CD8-positive, alpha-beta T cell (primary cell): ENCODE measurements at regions of chr3 and their contacts with region 1.

Region 1: DNA sequence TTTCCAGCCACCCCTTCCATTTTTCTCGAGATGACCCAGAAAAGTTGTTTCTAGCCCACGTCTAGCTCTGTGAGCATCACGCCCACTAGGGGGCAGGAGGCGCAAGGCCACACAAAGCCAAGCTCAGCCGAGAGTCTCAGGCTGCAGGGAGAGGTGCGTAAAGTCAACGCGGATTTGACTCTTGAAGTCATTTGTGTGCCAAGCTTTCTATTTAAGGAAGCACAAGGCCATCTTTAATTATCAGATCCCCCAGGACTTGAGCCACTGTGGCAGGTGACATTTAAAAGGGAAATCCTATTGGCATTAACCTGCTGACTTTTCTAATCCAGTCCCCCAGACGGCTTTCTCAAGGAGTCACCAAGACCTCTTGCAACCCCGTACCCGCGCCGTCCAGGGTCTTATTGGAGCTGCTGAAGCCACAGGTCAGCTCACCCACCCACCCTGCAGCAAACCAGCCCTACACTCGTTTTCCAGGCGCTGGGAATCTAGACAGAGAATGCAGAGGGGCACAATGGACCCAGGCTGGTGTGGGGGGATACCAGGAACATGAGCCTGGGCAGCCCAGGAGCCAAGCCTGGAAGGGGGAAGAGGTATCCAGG is 62.1 kb downstream of the CAPN7 start:
- DNase-seq: peak; percentile 69 to 92 (median 87)
- ATAC-seq: peak; percentile 50
- H3K4me3 ChIP-seq: no peak overlapping the region
- H3K4me3 Mint-ChIP-seq: no peak overlapping the region
- H3K27ac ChIP-seq: peak overlapping the region in 1 of 2 experiments; percentile 77
- H3K27ac Mint-ChIP-seq: no peak overlapping the region
- H3K4me1 ChIP-seq: peaks cover 64% of the 10 kb centered on the region
- H3K4me1 Mint-ChIP-seq: peaks cover 57% of the 10 kb centered on the region
- H3K27me3 ChIP-seq: no peaks in the 10 kb centered on the region
- H3K27me3 Mint-ChIP-seq: no peaks in the 10 kb centered on the region
- CTCF ChIP-seq: peak; percentile 83

Region 2: DNA sequence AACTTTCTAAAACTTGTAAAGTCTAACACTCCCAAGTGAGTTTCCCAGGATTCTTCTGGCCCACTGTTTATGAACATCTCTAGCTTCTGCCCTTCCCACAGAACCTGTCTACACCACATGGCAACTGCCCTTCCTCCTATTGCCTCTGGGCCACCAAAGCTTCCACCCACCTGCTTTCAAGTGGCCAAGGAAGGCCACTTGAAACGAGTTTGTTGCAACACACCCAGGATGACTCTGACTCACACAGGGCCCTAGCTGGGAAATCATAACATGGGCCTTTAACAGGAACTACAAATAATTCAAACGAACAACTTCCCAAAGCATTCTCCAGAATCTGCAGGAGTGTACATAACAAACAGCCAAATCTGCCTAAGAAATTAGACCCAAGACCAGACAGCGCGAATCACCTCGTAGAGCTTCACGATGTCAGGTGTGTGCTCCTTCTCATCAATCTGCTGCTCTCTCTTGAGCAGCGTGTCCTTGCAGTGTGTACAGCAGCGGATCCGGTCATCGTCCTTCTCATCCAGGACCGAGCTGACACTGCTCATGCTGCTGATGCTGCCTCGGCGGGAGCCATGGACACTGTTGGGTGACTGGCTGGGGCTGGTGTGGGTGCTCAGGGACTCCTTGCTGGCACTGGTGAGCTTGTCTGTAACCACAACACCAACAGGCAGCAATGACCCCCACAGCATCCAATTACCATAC is 186.0 kb before region 1 on chr3:
- CTCF ChIA-PET with region 1: no interaction called
- POLR2A ChIA-PET with region 1: no interaction called
- intact Hi-C with region 1: no loop called
- DNase-seq: no peak
- ATAC-seq: no peak
- H3K4me3 ChIP-seq: no peak overlapping the region
- H3K4me3 Mint-ChIP-seq: no peak overlapping the region
- H3K27ac ChIP-seq: no peak overlapping the region
- H3K27ac Mint-ChIP-seq: no peak overlapping the region
- H3K4me1 ChIP-seq: no peaks in the 10 kb centered on the region
- H3K4me1 Mint-ChIP-seq: no peaks in the 10 kb centered on the region
- H3K27me3 ChIP-seq: no peaks in the 10 kb centered on the region
- H3K27me3 Mint-ChIP-seq: no peaks in the 10 kb centered on the region
- CTCF ChIP-seq: no peak

Region 3: GRCh38 chr3:15098503-15099363 is 169.4 kb before region 1 on chr3 and contains the start of gene RBSN:
- CTCF ChIA-PET with region 1: no interaction called
- POLR2A ChIA-PET with region 1: interaction called, 3 read pairs
- intact Hi-C with region 1: loop called in 1 of 2 experiments (anchors 2 kb)
- DNase-seq: peak; percentile 87 to 98 (median 94)
- ATAC-seq: peak; percentile 76
- H3K4me3 ChIP-seq: peak within 1 kb of the TSS; percentile 71 to 76
- H3K4me3 Mint-ChIP-seq: peak within 1 kb of the TSS; percentile 88
- H3K27ac ChIP-seq: peak within 1 kb of the TSS; percentile 96 to 98
- H3K27ac Mint-ChIP-seq: peak within 1 kb of the TSS; percentile 95
- H3K4me1 ChIP-seq: peaks cover 16% of the 10 kb centered on the region
- H3K4me1 Mint-ChIP-seq: peaks cover 31% of the 10 kb centered on the region
- H3K27me3 ChIP-seq: no peaks in the 10 kb centered on the region
- H3K27me3 Mint-ChIP-seq: no peaks in the 10 kb centered on the region
- CTCF ChIP-seq: no peak
- total RNA-seq, gene RBSN: 41.9 to 48.1 TPM

Region 4: GRCh38 chr3:15291589-15292541 is 23.7 kb after region 1 on chr3:
- CTCF ChIA-PET with region 1: interaction called, 10 read pairs
- POLR2A ChIA-PET with region 1: interaction called, 8 read pairs
- intact Hi-C with region 1: loop called (anchors 1 kb)
- DNase-seq: peak; percentile 39 to 93 (median 73)
- ATAC-seq: peak; percentile 93
- H3K4me3 ChIP-seq: peak overlapping the region; percentile 19 to 23
- H3K4me3 Mint-ChIP-seq: peak overlapping the region; percentile 70
- H3K27ac ChIP-seq: peak overlapping the region; percentile 14 to 71
- H3K27ac Mint-ChIP-seq: peak overlapping the region; percentile 92
- H3K4me1 ChIP-seq: peaks cover 54% of the 10 kb centered on the region
- H3K4me1 Mint-ChIP-seq: peaks cover 73% of the 10 kb centered on the region
- H3K27me3 ChIP-seq: no peaks in the 10 kb centered on the region
- H3K27me3 Mint-ChIP-seq: no peaks in the 10 kb centered on the region
- CTCF ChIP-seq: no peak

Region 5: GRCh38 chr3:15325242-15325641 is 57.1 kb after region 1 on chr3:
- CTCF ChIA-PET with region 1: interaction called, 63 read pairs
- POLR2A ChIA-PET with region 1: interaction called, 3 read pairs
- intact Hi-C with region 1: no loop called
- DNase-seq: no peak
- ATAC-seq: no peak
- H3K4me3 ChIP-seq: no peak overlapping the region
- H3K4me3 Mint-ChIP-seq: no peak overlapping the region
- H3K27ac ChIP-seq: no peak overlapping the region
- H3K27ac Mint-ChIP-seq: no peak overlapping the region
- H3K4me1 ChIP-seq: peaks cover 22% of the 10 kb centered on the region
- H3K4me1 Mint-ChIP-seq: peaks cover 52% of the 10 kb centered on the region
- H3K27me3 ChIP-seq: no peaks in the 10 kb centered on the region
- H3K27me3 Mint-ChIP-seq: no peaks in the 10 kb centered on the region
- CTCF ChIP-seq: no peak

Region 6: GRCh38 chr3:15354485-15354884 is 86.4 kb after region 1 on chr3:
- CTCF ChIA-PET with region 1: interaction called, 11 read pairs
- POLR2A ChIA-PET with region 1: interaction called, 4 read pairs
- intact Hi-C with region 1: no loop called
- DNase-seq: no peak
- ATAC-seq: no peak
- H3K4me3 ChIP-seq: no peak overlapping the region
- H3K4me3 Mint-ChIP-seq: no peak overlapping the region
- H3K27ac ChIP-seq: no peak overlapping the region
- H3K27ac Mint-ChIP-seq: no peak overlapping the region
- H3K4me1 ChIP-seq: peaks cover 14% of the 10 kb centered on the region
- H3K4me1 Mint-ChIP-seq: peaks cover 22% of the 10 kb centered on the region
- H3K27me3 ChIP-seq: no peaks in the 10 kb centered on the region
- H3K27me3 Mint-ChIP-seq: no peaks in the 10 kb centered on the region
- CTCF ChIP-seq: no peak

Region 7: GRCh38 chr3:15377961-15378791 is 110.0 kb after region 1 on chr3:
- CTCF ChIA-PET with region 1: interaction called, 104 read pairs
- POLR2A ChIA-PET with region 1: interaction called, 11 read pairs
- intact Hi-C with region 1: loop called (anchors 1 kb)
- DNase-seq: peak; percentile 88 to 97 (median 93)
- ATAC-seq: peak; percentile 97
- H3K4me3 ChIP-seq: no peak overlapping the region
- H3K4me3 Mint-ChIP-seq: no peak overlapping the region
- H3K27ac ChIP-seq: peak overlapping the region; percentile 55 to 90
- H3K27ac Mint-ChIP-seq: peak overlapping the region; percentile 89
- H3K4me1 ChIP-seq: peaks cover 5% of the 10 kb centered on the region
- H3K4me1 Mint-ChIP-seq: peaks cover 8% of the 10 kb centered on the region
- H3K27me3 ChIP-seq: no peaks in the 10 kb centered on the region
- H3K27me3 Mint-ChIP-seq: no peaks in the 10 kb centered on the region
- CTCF ChIP-seq: peak; percentile 85

Region 8: DNA sequence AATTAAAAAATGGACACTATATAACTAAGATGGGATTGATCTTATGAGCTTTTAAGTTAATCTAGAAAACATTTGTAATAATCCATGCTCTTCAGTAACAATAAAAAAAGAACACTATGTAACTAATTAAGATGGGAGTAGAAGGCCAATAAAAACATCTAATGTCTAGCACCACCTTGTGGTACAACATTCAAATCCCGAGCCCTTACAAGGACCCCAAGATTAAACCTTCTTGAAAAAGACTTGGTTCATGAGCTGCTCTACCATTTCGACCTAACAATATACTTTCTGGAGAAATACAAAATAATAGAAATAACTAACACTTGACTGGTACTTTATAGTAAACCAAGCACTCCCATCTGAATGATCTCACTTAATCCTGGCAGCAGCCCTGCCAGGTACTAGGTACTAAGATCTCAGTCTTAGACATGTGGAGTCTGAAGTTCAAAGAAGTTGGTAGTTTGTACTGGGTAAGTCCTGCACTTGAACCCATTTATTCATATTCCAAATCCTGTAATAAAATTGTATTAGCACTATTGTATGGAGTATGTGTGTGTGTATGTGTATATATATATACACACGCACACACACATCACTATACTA is 137.4 kb after region 1 on chr3:
- CTCF ChIA-PET with region 1: interaction called, 107 read pairs
- POLR2A ChIA-PET with region 1: no interaction called
- intact Hi-C with region 1: loop called (anchors 1 kb)
- DNase-seq: peak in 3 of 9 experiments; percentile 22 to 77 (median 69)
- ATAC-seq: peak; percentile 73
- H3K4me3 ChIP-seq: no peak overlapping the region
- H3K4me3 Mint-ChIP-seq: no peak overlapping the region
- H3K27ac ChIP-seq: no peak overlapping the region
- H3K27ac Mint-ChIP-seq: no peak overlapping the region
- H3K4me1 ChIP-seq: no peaks in the 10 kb centered on the region
- H3K4me1 Mint-ChIP-seq: peaks cover 4% of the 10 kb centered on the region
- H3K27me3 ChIP-seq: no peaks in the 10 kb centered on the region
- H3K27me3 Mint-ChIP-seq: no peaks in the 10 kb centered on the region
- CTCF ChIP-seq: peak; percentile 61